Activated CD4-positive, alpha-beta T cell treated with anti-CD3 and anti-CD28 coated beads for 36 hours (primary cell): ENCODE measurements at regions of chr5 and their contacts with region 1.

Region 1: GRCh38 chr5:154189819-154190594 is 526 bp upstream of the GALNT10 start:
- DNase-seq: peak; percentile 85
- ATAC-seq: peak; percentile 72
- H3K4me3 Mint-ChIP-seq: peak overlapping the region; percentile 77
- H3K27ac Mint-ChIP-seq: peak overlapping the region; percentile 69
- H3K4me1 Mint-ChIP-seq: peaks cover 28% of the 10 kb centered on the region
- H3K27me3 Mint-ChIP-seq: peaks cover 9% of the 10 kb centered on the region

Region 2: GRCh38 chr5:154038707-154039457 is 151.1 kb before region 1 on chr5 and contains the starts of genes FAM114A2 and MFAP3:
- CTCF ChIA-PET with region 1: interaction called, 4 read pairs
- POLR2A ChIA-PET with region 1: interaction called, 8 read pairs
- intact Hi-C with region 1: loop called in 1 of 2 experiments (anchors 1 kb)
- DNase-seq: peak; percentile 94
- ATAC-seq: peak; percentile 99
- H3K4me3 Mint-ChIP-seq: peak within 1 kb of the TSS; percentile 100
- H3K27ac Mint-ChIP-seq: peak within 1 kb of the TSS; percentile 92
- H3K4me1 Mint-ChIP-seq: peaks cover 55% of the 10 kb centered on the region
- H3K27me3 Mint-ChIP-seq: no peaks in the 10 kb centered on the region
- total RNA-seq, gene FAM114A2: 27.9 to 28.5 TPM
- total RNA-seq, gene MFAP3: 13.2 to 13.5 TPM

Region 3: GRCh38 chr5:154138701-154139100 is 51.3 kb before region 1 on chr5:
- CTCF ChIA-PET with region 1: no interaction called
- POLR2A ChIA-PET with region 1: no interaction called
- intact Hi-C with region 1: no loop called
- DNase-seq: no peak
- ATAC-seq: no peak
- H3K4me3 Mint-ChIP-seq: no peak overlapping the region
- H3K27ac Mint-ChIP-seq: no peak overlapping the region
- H3K4me1 Mint-ChIP-seq: no peaks in the 10 kb centered on the region
- H3K27me3 Mint-ChIP-seq: peaks cover 2% of the 10 kb centered on the region

Region 4: DNA sequence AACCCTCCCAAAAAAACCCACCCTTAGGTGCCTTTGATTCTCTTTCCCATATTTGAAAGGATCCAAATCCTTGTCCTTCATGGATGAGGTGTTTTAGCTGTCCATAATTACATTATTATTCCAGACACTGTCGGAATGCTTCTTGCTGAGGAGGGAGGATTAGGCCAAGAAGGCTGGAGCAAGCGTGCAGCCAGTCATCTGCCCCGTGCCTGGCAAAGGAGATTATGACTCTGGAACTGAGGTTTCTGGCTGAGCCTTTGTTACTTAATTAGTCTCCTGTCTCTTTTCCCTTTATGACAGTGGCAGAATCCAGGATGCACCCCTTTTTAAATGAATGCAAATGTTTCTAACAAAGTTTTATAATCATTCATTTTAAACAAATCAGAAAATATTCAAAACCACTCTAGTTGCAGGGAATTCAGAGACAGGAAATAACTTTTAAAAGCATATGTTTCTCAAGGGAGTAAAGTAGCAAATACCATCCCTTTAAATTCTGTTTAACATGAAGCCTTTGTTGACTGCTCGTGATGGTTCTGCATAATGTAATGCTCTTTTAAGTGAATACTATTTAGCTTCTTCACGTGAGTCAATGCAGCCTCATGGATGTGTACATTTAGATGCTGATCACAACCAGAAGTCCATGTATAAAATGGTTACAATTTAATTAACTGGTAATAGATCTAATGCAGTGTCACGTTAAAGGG is 70.4 kb after region 1 on chr5:
- CTCF ChIA-PET with region 1: no interaction called
- POLR2A ChIA-PET with region 1: no interaction called
- intact Hi-C with region 1: no loop called
- DNase-seq: no peak
- ATAC-seq: no peak
- H3K4me3 Mint-ChIP-seq: no peak overlapping the region
- H3K27ac Mint-ChIP-seq: no peak overlapping the region
- H3K4me1 Mint-ChIP-seq: no peaks in the 10 kb centered on the region
- H3K27me3 Mint-ChIP-seq: no peaks in the 10 kb centered on the region

Region 5: GRCh38 chr5:154311362-154311761 is 121.4 kb after region 1 on chr5:
- CTCF ChIA-PET with region 1: no interaction called
- POLR2A ChIA-PET with region 1: no interaction called
- intact Hi-C with region 1: loop called in 1 of 2 experiments (anchors 2 kb)
- DNase-seq: peak; percentile 66
- ATAC-seq: peak; percentile 92
- H3K4me3 Mint-ChIP-seq: no peak overlapping the region
- H3K27ac Mint-ChIP-seq: peak overlapping the region; percentile 53
- H3K4me1 Mint-ChIP-seq: peaks cover 32% of the 10 kb centered on the region
- H3K27me3 Mint-ChIP-seq: no peaks in the 10 kb centered on the region

Region 6: DNA sequence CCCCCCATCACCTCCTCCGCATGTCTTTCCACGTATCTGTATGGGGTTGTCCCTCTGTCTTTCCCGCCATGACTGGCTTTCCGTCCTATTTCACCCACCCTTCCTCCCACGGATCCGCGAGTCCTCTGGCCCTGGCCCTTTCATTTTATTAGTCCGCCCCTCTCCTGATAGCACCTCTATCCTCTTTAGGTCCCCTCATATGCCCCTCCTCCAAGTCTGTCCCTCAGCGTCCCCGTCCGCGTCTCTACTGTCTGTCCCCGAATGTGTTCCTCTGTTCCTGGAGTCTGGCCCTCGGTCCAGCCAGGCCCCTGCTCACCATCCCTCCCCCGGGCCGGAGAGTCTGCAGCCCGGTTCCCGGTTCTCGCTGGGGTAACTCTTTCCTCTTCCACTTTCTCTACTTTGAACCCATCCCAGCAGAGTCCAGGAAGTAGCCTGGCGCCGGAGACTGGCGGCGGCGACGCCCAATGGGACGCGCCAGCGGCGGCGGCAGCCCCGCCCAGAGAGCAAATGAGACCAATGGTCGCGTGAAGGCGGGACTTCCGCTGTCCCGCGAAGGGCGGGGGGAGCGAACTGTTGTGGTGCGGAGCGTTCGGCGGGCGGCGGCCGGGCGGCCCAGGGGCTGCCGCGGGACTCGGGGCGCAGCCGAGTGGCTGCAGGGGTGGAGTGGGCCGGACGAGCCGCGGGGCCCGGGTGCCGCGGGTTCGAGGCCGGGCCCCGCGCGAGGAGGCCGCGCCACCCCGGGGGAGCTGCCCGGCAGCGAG is 255.6 kb after region 1 on chr5 and contains the start of gene SAP30L:
- CTCF ChIA-PET with region 1: no interaction called
- POLR2A ChIA-PET with region 1: no interaction called
- intact Hi-C with region 1: loop called (anchors 1 to 5 kb)
- DNase-seq: peak; percentile 96
- ATAC-seq: peak; percentile 97
- H3K4me3 Mint-ChIP-seq: peak within 1 kb of the TSS; percentile 98
- H3K27ac Mint-ChIP-seq: peak within 1 kb of the TSS; percentile 96
- H3K4me1 Mint-ChIP-seq: peaks cover 40% of the 10 kb centered on the region
- H3K27me3 Mint-ChIP-seq: no peaks in the 10 kb centered on the region
- total RNA-seq, gene SAP30L: 22.1 to 24.5 TPM

Region 7: DNA sequence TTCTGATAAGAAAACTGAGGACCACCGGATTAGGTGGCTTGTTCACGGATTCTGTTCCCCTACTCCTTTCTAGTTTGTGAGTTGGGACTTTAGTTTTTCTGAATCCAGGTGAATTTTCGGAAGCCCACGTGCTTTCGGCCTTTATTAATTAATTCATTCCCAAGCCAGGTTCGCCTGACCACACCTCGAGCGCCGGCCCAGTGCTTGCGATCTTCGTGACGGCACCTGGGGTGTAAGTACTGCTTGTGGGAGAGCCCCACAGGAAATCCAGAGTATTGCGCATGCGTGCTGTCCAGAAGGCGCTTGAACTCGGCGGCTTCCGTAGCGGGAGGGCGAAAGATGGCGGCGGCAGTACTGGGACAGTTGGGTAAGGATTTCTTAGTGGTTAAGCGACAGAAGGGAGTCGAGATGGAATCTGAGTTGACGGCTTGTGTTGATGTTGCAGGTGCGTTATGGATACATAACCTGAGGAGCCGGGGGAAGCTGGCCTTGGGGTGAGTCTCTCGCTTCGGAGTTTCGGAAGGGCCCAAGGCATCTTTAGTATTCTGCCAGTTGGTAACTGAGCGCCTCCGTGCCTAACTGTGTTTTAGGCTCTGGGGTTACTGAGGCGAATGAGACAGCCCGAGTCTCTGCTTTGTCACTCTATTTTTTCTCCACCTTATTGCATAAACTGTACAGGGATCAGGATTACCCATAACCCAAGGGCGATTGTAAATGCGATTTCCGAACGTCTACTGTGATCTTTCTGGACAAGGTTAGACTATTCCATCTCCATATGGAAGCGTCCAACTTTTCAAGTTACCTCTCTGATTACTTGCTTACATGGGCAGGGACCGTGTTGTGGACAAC is 751.0 kb after region 1 on chr5 and contains the start of gene MRPL22:
- CTCF ChIA-PET with region 1: no interaction called
- POLR2A ChIA-PET with region 1: no interaction called
- intact Hi-C with region 1: loop called (anchors 1 to 5 kb)
- DNase-seq: peak; percentile 97
- ATAC-seq: peak; percentile 72
- H3K4me3 Mint-ChIP-seq: peak within 1 kb of the TSS; percentile 97
- H3K27ac Mint-ChIP-seq: peak within 1 kb of the TSS; percentile 96
- H3K4me1 Mint-ChIP-seq: peaks cover 40% of the 10 kb centered on the region
- H3K27me3 Mint-ChIP-seq: no peaks in the 10 kb centered on the region
- total RNA-seq, gene MRPL22: 77.2 to 86.7 TPM